ENCODE measurements at regions of chr11 and their contacts with region 1.

Region 1: DNA sequence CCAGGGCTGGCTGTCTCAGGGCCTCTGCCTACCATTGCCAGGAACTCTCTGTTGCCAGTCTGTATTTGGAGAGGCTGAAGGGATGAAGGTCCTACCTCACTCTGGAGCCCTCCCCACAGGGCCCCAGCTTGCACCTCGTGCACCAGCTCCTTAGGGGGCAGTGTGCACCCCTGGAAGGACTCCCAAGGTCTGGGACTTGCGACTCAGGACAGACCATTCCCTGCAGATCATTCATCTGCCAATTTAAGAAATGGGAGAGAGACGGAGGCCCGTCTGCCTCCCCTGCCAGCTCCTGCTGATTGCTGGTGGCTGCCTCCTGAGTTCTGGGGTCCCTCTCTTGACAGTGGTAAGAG is 27.5 kb upstream of the MALAT1 start:
- DNase-seq: peak; percentile 83 to 94 (median 86)
- ATAC-seq: peak; percentile 86 to 91 (median 88)
- H3K4me3 ChIP-seq: peak overlapping the region in 11 of 12 donors; percentile 14 to 48 (median 36)
- H3K27ac ChIP-seq: peak overlapping the region; percentile 94 to 100 (median 98)
- H3K4me1 ChIP-seq: peaks cover 13 to 48% (median 35%) of the 10 kb centered on the region in 12 donors
- H3K27me3 ChIP-seq: no peaks in the 10 kb centered on the region
- CTCF ChIP-seq: peak; percentile 55 to 81 (median 70)
- POLR2A ChIP-seq: no peak

Region 2: DNA sequence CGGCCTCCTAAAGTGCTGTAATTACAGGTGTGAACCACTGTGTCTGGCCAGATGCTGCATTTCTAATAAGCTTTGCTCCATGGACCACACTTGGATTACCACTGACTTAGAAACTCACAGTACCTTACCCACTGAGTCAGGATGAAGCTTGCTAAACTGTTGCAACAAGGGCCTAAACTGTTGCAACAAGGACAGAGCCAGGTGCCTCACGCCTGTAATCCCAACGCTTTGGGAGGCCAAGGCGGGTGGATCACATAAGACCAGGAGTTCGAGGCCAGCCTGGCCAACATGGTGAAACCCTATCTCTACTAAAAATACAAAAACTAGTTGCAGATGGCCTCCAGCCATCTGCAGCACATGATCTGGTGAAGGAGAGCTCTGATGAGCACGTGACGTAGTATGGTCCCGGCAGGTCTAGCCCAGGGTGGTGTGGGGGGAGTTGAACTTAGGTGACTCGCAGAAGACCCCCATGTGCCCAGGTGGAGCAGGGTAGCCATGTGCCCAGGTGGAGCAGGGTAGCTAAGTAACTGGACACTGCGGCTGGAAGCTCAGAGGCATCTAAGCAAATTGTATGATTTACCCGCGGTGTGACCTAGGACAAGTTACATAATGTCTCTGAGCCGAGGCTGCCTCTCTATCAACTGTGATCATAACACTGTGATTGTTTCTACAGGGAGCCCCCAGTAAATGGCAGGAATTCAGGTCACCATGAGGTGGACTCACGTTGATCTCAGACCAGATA is 97.4 kb before region 1 on chr11:
- intact Hi-C with region 1: loop called in 2 of 10 experiments (anchors 5 kb)
- DNase-seq: no peak
- ATAC-seq: no peak
- H3K4me3 ChIP-seq: no peak overlapping the region
- H3K27ac ChIP-seq: no peak overlapping the region
- H3K4me1 ChIP-seq: peaks cover 0 to 33% (median 19%) of the 10 kb centered on the region in 12 donors
- H3K27me3 ChIP-seq: no peaks in the 10 kb centered on the region
- CTCF ChIP-seq: no peak
- POLR2A ChIP-seq: no peak

Region 3: GRCh38 chr11:65391007-65391406 is 80.4 kb before region 1 on chr11:
- intact Hi-C with region 1: no loop called
- DNase-seq: peak in 3 of 5 donors; percentile 62 to 67 (median 66)
- ATAC-seq: peak; percentile 31 to 67 (median 46)
- H3K4me3 ChIP-seq: peak overlapping the region in 9 of 12 donors; percentile 11 to 48 (median 25)
- H3K27ac ChIP-seq: peak overlapping the region; percentile 72 to 92 (median 86)
- H3K4me1 ChIP-seq: peaks cover 17 to 66% (median 49%) of the 10 kb centered on the region in 12 donors
- H3K27me3 ChIP-seq: no peaks in the 10 kb centered on the region
- CTCF ChIP-seq: peak in 3 of 12 donors; percentile 6 to 17 (median 7)
- POLR2A ChIP-seq: no peak

Region 4: DNA sequence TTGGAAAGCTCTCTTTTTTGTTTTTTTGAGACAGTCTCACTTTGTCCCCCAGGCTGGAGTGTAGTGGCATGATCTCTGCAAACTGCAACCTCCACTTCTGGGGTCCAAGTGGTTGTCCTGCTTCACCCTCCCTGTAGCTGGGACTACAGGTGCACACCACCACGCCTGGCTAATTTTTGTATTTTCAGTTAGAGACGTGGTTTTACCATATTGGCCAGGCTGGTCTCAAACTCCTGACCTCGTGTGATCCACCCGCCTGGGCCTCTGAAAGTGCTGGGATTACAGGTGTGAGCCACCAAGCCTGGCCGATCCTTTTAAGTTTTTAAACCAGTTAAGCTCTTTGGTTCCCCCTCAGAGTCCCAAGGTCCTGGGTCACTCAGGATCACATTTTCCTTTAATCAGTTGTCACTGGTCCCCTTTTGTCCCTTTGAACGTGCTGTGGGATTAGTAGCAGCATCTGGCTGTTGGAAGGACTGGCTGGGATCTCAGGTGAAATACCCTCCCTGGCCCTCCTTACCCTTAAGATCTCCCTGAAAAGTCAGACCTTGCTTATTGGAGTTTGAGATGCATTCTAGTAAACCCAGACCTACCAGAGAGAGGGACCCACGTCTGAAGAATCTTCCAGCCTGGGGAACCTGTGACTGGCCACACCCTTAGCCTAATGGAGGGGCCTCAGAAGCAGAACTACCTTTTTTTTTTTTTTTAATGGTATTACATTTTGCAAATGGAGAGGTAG is 35.6 kb after region 1 on chr11:
- intact Hi-C with region 1: loop called (anchors 1 to 5 kb)
- DNase-seq: peak in 3 of 5 donors; percentile 35 to 39 (median 38)
- ATAC-seq: peak; percentile 21 to 50 (median 43)
- H3K4me3 ChIP-seq: peak overlapping the region in 9 of 12 donors; percentile 70 to 90 (median 82)
- H3K27ac ChIP-seq: peak overlapping the region; percentile 65 to 100 (median 98)
- H3K4me1 ChIP-seq: peaks cover 0 to 57% (median 26%) of the 10 kb centered on the region in 12 donors
- H3K27me3 ChIP-seq: no peaks in the 10 kb centered on the region
- CTCF ChIP-seq: no peak
- POLR2A ChIP-seq: peak in 1 of 2 donors; percentile 35

Region 5: GRCh38 chr11:65530157-65530496 is 58.7 kb after region 1 on chr11:
- intact Hi-C with region 1: no loop called
- DNase-seq: no peak
- ATAC-seq: no peak
- H3K4me3 ChIP-seq: no peak overlapping the region
- H3K27ac ChIP-seq: no peak overlapping the region
- H3K4me1 ChIP-seq: peaks cover 0 to 29% (median 12%) of the 10 kb centered on the region in 12 donors
- H3K27me3 ChIP-seq: no peaks in the 10 kb centered on the region
- CTCF ChIP-seq: no peak
- POLR2A ChIP-seq: no peak